ENCODE measurements at regions of chr11 and their contacts with region 1.

Region 1: DNA sequence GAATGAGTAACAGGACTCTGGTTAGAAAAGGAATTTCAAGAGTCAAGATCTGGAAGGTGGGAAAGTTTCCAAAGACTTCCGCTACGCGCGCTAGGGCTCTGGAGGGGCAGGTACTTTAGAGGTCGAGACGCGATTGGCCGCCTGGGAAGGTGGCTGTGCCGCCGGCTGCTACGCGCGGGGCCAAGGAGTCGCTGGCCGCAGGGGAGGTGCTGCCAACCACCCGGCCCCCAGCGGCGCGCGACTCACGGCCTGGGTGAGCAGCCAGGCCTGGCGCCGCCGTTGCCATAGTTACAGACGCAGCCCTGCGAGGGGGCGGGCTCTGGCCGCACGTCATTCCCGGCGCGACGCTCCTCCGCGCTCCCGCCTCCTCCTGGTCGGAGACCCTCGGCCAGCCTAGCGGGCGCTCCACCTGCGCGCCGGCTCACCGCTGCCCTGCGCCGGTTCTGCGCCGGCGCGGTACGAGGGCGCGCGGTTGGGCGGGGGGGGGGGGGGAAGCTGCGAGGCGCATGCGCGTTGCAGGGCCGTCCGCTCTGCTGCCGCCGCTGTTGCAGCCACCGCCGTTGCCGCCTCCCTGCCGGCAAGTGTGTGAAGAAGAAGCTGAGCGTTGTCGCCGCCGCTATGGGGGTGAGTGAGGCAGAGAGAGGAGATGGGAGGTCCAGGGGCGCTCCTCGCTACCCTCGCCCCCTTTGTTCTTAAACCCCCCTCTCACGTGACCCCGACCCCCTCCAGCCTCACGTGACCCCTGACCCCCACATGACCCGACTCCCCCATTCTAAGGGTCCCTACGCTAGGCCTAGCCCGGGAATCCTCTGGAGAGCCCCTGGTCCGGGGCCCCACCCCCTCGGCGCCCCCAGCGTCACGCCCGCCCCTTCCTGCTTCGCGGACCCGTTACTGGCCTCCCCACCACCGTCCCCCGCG is at the start of gene NAA40:
- DNase-seq: peak; percentile 91 to 97
- ATAC-seq: peak; percentile 89 to 94 (median 91)
- H3K4me3 ChIP-seq: peak within 1 kb of the TSS; percentile 66
- H3K4me3 Mint-ChIP-seq: peak within 1 kb of the TSS; percentile 89
- H3K27ac ChIP-seq: peak within 1 kb of the TSS; percentile 70
- H3K27ac Mint-ChIP-seq: peak within 1 kb of the TSS; percentile 83 to 91
- H3K4me1 ChIP-seq: peaks cover 19% of the 10 kb centered on the region
- H3K4me1 Mint-ChIP-seq: peaks cover 30 to 31% of the 10 kb centered on the region in 2 donors
- H3K27me3 ChIP-seq: no peaks in the 10 kb centered on the region
- H3K27me3 Mint-ChIP-seq: no peaks in the 10 kb centered on the region
- CTCF ChIP-seq: no peak
- total RNA-seq, gene NAA40: 44.8 to 72.1 (median 57.4) TPM

Region 2: GRCh38 chr11:63866211-63866610 is 72.5 kb before region 1 on chr11:
- intact Hi-C with region 1: loop called (anchors 5 kb)
- DNase-seq: peak; percentile 60 to 90
- ATAC-seq: peak; percentile 86 to 93 (median 90)
- H3K4me3 ChIP-seq: no peak overlapping the region
- H3K4me3 Mint-ChIP-seq: peak overlapping the region; percentile 81
- H3K27ac ChIP-seq: peak overlapping the region; percentile 79
- H3K27ac Mint-ChIP-seq: peak overlapping the region; percentile 81 to 87
- H3K4me1 ChIP-seq: peaks cover 79% of the 10 kb centered on the region
- H3K4me1 Mint-ChIP-seq: peaks cover 75 to 78% of the 10 kb centered on the region in 2 donors
- H3K27me3 ChIP-seq: no peaks in the 10 kb centered on the region
- H3K27me3 Mint-ChIP-seq: no peaks in the 10 kb centered on the region
- CTCF ChIP-seq: no peak

Region 3: GRCh38 chr11:63888170-63889086 is 50.3 kb before region 1 on chr11:
- intact Hi-C with region 1: loop called (anchors 2 kb)
- DNase-seq: peak; percentile 55 to 86
- ATAC-seq: peak; percentile 77 to 86 (median 82)
- H3K4me3 ChIP-seq: peak overlapping the region; percentile 70
- H3K4me3 Mint-ChIP-seq: peak overlapping the region; percentile 93
- H3K27ac ChIP-seq: peak overlapping the region; percentile 90
- H3K27ac Mint-ChIP-seq: peak overlapping the region; percentile 94
- H3K4me1 ChIP-seq: peaks cover 73% of the 10 kb centered on the region
- H3K4me1 Mint-ChIP-seq: peaks cover 70 to 75% of the 10 kb centered on the region in 2 donors
- H3K27me3 ChIP-seq: no peaks in the 10 kb centered on the region
- H3K27me3 Mint-ChIP-seq: no peaks in the 10 kb centered on the region
- CTCF ChIP-seq: no peak

Region 4: GRCh38 chr11:64015935-64016845 is 77.5 kb after region 1 on chr11:
- intact Hi-C with region 1: no loop called
- DNase-seq: no peak
- ATAC-seq: no peak
- H3K4me3 ChIP-seq: no peak overlapping the region
- H3K4me3 Mint-ChIP-seq: no peak overlapping the region
- H3K27ac ChIP-seq: no peak overlapping the region
- H3K27ac Mint-ChIP-seq: no peak overlapping the region
- H3K4me1 ChIP-seq: no peaks in the 10 kb centered on the region
- H3K4me1 Mint-ChIP-seq: peaks cover 0 to 2% of the 10 kb centered on the region in 2 donors
- H3K27me3 ChIP-seq: no peaks in the 10 kb centered on the region
- H3K27me3 Mint-ChIP-seq: no peaks in the 10 kb centered on the region
- CTCF ChIP-seq: no peak